ENCODE measurements at regions of chr6 and their contacts with region 1.

Region 1: DNA sequence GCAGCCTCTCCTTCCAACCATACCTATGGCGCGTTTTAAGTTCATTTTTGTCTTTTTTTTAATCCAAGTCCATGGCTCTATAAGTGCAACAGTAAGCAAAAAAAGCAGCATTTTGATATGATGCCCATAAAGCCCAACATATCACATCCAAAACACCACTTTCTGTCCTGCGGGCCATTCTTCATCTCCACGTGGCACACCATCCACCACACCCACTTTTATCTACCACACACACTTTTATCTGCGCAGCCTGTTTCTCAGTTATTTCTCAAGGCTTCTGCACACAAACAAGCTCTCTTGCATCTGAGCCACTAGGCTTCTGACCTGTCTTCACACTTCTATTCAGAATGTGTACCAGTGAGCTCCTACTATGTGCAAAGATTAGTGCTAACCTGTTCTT is 5.3 kb downstream of the GCLC start:
- H3K4me3 Mint-ChIP-seq: no peak overlapping the region
- H3K27ac Mint-ChIP-seq: no peak overlapping the region
- H3K4me1 Mint-ChIP-seq: peaks cover 55% of the 10 kb centered on the region
- H3K27me3 Mint-ChIP-seq: no peaks in the 10 kb centered on the region

Region 2: DNA sequence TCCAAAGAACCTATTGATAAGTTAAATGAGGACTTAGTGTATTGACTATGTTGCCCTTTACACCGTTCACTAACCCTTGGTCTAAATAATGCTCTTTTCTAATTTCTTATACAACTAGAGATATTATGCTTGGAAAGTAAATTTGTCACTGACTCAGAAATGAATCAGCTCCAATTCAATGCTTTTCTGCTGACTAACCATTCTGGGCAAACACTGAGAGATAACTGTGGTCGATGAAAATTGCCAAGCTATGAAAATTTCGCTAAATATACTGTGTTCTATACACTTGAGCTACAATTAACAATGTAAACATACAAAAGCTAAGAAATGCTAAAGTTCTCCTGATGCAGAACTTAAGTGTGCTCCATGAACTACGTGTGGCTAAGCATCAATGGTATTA is 497.4 kb before region 1 on chr6:
- intact Hi-C with region 1: no loop called
- H3K4me3 Mint-ChIP-seq: no peak overlapping the region
- H3K27ac Mint-ChIP-seq: no peak overlapping the region
- H3K4me1 Mint-ChIP-seq: no peaks in the 10 kb centered on the region
- H3K27me3 Mint-ChIP-seq: peaks cover 4% of the 10 kb centered on the region

Region 3: GRCh38 chr6:53504512-53504911 is 35.0 kb before region 1 on chr6:
- intact Hi-C with region 1: loop called (anchors 5 kb)
- H3K4me3 Mint-ChIP-seq: no peak overlapping the region
- H3K27ac Mint-ChIP-seq: peak overlapping the region; percentile 60
- H3K4me1 Mint-ChIP-seq: peaks cover 25% of the 10 kb centered on the region
- H3K27me3 Mint-ChIP-seq: no peaks in the 10 kb centered on the region